Vagina (tissue), 2 donors: ENCODE measurements at regions of chr12 and their contacts with region 1.

Region 1: GRCh38 chr12:10136637-10137205 is 6.7 kb upstream of the CLEC7A start:
- DNase-seq: no peak
- H3K4me3 ChIP-seq: no peak overlapping the region
- H3K27ac ChIP-seq: no peak overlapping the region
- H3K4me1 ChIP-seq: no peaks in the 10 kb centered on the region
- H3K27me3 ChIP-seq: no peaks in the 10 kb centered on the region
- CTCF ChIP-seq: no peak
- POLR2A ChIP-seq: no peak

Region 2: GRCh38 chr12:10033783-10034545 is 102.8 kb before region 1 on chr12:
- intact Hi-C with region 1: loop called (anchors 5 kb)
- DNase-seq: no peak
- H3K4me3 ChIP-seq: no peak overlapping the region
- H3K27ac ChIP-seq: no peak overlapping the region
- H3K4me1 ChIP-seq: no peaks in the 10 kb centered on the region
- H3K27me3 ChIP-seq: no peaks in the 10 kb centered on the region
- CTCF ChIP-seq: peak; percentile 31 to 37 (median 35)
- POLR2A ChIP-seq: no peak

Region 3: DNA sequence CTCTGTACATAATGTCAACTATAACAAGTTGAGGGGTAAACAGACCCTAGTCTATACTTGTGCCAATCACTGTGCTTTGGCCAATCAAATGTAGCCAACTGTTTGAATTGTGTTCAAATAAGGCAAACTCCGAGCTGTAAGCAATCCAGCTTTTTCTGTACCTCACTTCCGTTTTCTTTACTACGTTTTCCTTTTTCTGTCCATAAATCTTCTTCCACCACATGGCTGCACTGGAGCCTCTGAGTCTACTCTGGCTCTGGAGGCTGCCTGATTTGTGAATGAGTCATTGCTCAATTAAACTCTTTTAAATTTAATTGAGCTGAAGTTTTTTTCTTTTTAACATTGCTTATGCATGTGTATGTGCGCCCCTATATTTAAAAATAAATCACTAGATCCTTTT is 67.6 kb before region 1 on chr12:
- intact Hi-C with region 1: no loop called
- DNase-seq: no peak
- H3K4me3 ChIP-seq: no peak overlapping the region
- H3K27ac ChIP-seq: peak overlapping the region; percentile 50
- H3K4me1 ChIP-seq: peaks cover 12% of the 10 kb centered on the region
- H3K27me3 ChIP-seq: no peaks in the 10 kb centered on the region
- CTCF ChIP-seq: no peak
- POLR2A ChIP-seq: no peak

Region 4: GRCh38 chr12:10982244-10982643 is 845.5 kb after region 1 on chr12:
- intact Hi-C with region 1: no loop called
- DNase-seq: no peak
- H3K4me3 ChIP-seq: no peak overlapping the region
- H3K27ac ChIP-seq: no peak overlapping the region
- H3K4me1 ChIP-seq: no peaks in the 10 kb centered on the region
- H3K27me3 ChIP-seq: no peaks in the 10 kb centered on the region
- CTCF ChIP-seq: no peak
- POLR2A ChIP-seq: no peak